Kidney (tissue), 22 donors: ENCODE measurements at regions of chr19 and their contacts with region 1.

Region 1: DNA sequence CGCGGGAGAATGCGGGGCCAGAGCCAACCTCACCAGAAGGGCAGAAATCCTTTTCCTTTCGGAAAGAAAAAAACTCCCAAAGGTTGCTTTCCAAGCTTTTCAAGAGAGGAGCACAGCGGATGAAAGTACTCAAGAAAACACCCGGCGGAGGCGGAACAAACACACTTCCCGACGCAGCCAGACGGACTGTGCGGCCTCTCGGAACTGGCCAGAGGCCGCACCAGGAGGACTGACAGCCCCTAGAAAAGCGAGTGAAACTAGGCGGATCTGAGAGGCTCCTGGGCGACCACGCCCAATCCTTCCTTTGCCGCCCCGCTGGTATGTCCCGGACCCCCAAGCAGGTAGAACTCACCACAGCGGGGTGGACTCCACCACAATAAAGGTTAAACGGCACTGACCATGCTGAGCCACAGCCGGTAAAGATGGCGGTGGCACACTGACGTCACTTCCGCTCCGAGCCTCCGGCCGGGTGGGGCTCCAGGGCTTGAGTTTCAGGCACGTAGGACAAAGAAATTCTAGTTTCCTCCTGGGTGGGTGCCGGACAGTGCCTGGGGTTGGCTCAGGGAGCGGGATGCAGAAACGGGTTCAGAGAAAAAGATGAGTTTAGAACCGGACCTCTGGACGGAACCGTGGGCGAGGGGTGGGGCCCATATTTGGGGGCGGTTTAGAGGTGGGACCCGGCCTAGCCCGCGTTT is at the start of gene ZNF562:
- DNase-seq: peak; percentile 95 to 97 (median 96)
- H3K4me3 ChIP-seq: peak within 1 kb of the TSS; percentile 76 to 99 (median 90)
- H3K27ac ChIP-seq: peak within 1 kb of the TSS; percentile 95 to 98
- H3K4me1 ChIP-seq: no peaks in the 10 kb centered on the region
- H3K27me3 ChIP-seq: no peaks in the 10 kb centered on the region
- CTCF ChIP-seq: no peak
- total RNA-seq, gene ZNF562: 37.6 TPM

Region 2: GRCh38 chr19:9584073-9584833 is 90.6 kb before region 1 on chr19 and contains the start of gene ZNF121:
- intact Hi-C with region 1: no loop called
- DNase-seq: peak; percentile 93 to 96 (median 94)
- H3K4me3 ChIP-seq: peak within 1 kb of the TSS; percentile 68 to 96 (median 85)
- H3K27ac ChIP-seq: peak within 1 kb of the TSS; percentile 92 to 93
- H3K4me1 ChIP-seq: peaks cover 0 to 4% (median 0%) of the 10 kb centered on the region in 3 donors
- H3K27me3 ChIP-seq: no peaks in the 10 kb centered on the region
- CTCF ChIP-seq: no peak
- total RNA-seq, gene ZNF121: 40.3 TPM

Region 3: DNA sequence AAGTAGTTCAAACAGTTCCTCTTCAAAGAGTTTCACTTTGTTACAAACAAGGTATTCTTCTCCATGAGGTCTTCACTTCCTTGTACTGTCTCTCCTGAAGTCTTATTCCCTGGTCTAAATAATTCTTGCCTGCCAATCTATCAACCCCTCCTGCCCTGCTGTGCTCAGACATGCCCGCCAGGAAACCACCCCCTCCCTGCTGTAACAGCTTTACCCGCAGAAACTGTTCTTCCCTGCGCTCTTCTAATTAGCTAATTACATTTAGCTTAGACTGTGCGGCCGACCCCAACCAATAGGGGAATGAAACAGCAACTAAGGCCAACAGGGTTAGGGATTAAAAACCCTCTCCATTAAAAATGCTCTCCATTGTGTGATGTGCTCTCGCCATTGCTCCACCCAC is 47.1 kb after region 1 on chr19:
- intact Hi-C with region 1: no loop called
- DNase-seq: no peak
- H3K4me3 ChIP-seq: no peak overlapping the region
- H3K27ac ChIP-seq: no peak overlapping the region
- H3K4me1 ChIP-seq: no peaks in the 10 kb centered on the region
- H3K27me3 ChIP-seq: no peaks in the 10 kb centered on the region
- CTCF ChIP-seq: no peak

Region 4: GRCh38 chr19:9768175-9769112 is 93.6 kb after region 1 on chr19 and contains the start of gene ZNF846:
- intact Hi-C with region 1: loop called (anchors 10 kb)
- DNase-seq: peak; percentile 96 to 98 (median 97)
- H3K4me3 ChIP-seq: peak within 1 kb of the TSS; percentile 81 to 96 (median 96)
- H3K27ac ChIP-seq: peak within 1 kb of the TSS; percentile 92 to 98
- H3K4me1 ChIP-seq: peaks cover 0 to 4% (median 0%) of the 10 kb centered on the region in 3 donors
- H3K27me3 ChIP-seq: no peaks in the 10 kb centered on the region
- CTCF ChIP-seq: no peak
- total RNA-seq, gene ZNF846: 17.7 TPM